ENCODE measurements at regions of chr17 and their contacts with region 1.

Region 1: DNA sequence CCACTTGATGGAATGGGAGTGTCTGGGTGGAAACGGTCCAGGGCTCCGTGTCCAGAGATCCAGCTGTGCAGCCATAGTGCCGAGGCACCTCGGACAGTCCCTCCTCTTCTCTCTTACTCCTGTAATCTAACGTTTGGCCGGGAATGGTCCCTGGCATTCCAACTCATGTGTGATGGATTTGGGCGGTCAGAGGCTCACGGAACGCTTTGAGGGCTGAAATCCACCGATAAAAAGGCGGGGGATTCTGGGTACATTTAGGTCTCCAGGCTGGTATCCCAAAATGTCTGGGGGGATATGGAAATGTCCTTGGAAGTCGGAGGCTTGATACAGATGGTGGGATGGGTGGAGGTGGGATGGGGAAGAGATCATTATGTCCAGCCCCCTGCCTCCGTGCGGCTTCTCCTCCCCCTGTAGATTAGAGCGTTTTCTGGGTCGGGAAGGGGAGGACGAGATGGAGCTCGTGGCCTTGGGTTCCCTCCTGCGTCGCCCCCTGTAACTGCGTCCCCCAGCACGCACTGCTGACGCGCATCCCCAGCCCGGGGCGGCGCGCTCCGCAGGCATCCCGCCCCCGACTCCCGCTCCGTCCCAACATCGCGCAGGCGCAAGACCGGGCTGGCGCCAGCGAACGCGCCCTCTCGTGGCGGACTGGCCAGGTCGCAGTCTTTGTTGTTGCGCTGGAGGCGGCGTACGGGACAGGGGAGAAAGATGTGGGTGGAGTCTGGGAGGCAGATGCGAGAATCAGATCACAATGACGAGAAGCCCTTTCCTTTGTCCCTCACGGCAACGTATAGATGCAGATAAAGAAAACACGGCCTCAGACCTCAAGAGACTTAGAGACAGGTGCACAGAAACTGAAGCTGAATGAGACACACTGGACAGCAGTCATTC is 4.5 kb upstream of the SGCA start:
- DNase-seq: peak; percentile 92

Region 2: DNA sequence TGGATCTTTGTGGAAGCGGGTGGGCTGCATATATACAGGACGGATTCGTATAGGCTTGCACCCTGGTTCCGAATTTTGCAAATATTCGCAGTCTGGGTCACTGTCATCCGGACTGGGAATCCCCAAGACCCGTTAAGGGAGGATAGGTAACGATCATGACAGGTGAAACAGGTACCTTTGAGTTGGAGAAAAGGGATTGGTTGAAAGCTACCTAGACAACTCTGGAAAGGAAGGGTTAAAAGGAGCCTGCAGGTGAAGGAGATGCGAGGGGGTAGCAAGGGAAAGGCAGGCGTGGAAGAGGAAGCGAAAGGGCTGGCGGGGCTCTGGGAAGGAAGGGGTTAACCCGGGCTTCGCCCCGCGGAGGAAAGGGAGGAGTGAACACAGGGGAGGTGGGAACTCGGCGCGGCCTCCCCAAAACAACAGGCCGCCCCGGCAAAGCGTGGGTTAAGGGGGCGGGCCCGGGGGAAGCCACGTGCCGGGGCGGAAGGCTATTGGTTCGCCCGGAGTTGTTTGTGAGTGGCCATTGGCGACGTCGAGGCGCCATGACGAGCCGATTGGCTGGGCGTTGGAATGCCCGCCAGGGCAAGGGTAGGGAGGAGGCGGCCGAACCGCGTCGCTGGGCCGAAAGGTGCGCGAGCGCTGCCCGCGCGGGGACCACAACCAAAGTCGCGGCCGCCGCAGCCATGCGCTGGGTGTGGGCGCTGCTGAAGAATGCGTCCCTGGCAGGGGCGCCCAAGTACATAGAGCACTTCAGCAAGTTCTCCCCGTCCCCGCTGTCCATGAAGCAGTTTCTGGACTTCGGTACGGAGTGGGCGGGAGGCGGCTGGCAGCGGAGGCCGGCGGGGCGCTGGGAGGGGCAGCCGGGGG is 66.3 kb before region 1 on chr17 and contains the start of gene PDK2:
- in situ Hi-C with region 1: no loop called
- DNase-seq: peak; percentile 98

Region 3: GRCh38 chr17:50114849-50115357 is 46.4 kb before region 1 on chr17:
- in situ Hi-C with region 1: loop called (anchors 10 kb)
- DNase-seq: peak; percentile 85